CD8-positive, alpha-beta T cell (primary cell): ENCODE measurements at regions of chr16 and their contacts with region 1.

Region 1: DNA sequence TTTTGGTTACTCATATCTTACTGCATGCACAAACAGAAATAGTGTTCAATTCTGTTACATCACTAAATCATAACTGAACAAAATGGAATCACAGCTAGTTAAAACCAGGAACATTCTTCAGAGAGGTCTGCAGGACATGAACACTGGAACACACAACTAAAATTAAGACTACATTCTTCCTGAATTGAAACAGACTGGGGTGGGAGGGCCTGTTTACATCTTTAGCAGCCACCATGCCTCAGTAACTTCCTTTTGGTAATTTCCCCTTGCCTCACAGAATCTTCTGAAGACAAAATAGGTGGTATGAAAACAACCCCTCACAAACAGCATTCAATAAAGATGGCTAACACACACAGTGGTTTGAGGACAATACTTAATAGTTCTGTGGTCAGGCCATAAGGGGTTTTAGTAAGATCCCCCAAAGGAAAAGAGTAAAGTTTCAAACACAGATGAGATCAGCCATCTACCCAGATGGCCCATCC is 6.5 kb downstream of the MARF1 start:
- DNase-seq: peak in 5 of 9 experiments; percentile 22 to 81 (median 35)
- ATAC-seq: peak; percentile 76
- H3K4me3 ChIP-seq: peak overlapping the region in 1 of 2 experiments; percentile 14
- H3K4me3 Mint-ChIP-seq: peak overlapping the region; percentile 74
- H3K27ac ChIP-seq: peak overlapping the region; percentile 55 to 72
- H3K27ac Mint-ChIP-seq: peak overlapping the region; percentile 96
- H3K4me1 ChIP-seq: peaks cover 74% of the 10 kb centered on the region
- H3K4me1 Mint-ChIP-seq: peaks cover 75% of the 10 kb centered on the region
- H3K27me3 ChIP-seq: no peaks in the 10 kb centered on the region
- H3K27me3 Mint-ChIP-seq: no peaks in the 10 kb centered on the region
- CTCF ChIP-seq: no peak

Region 2: DNA sequence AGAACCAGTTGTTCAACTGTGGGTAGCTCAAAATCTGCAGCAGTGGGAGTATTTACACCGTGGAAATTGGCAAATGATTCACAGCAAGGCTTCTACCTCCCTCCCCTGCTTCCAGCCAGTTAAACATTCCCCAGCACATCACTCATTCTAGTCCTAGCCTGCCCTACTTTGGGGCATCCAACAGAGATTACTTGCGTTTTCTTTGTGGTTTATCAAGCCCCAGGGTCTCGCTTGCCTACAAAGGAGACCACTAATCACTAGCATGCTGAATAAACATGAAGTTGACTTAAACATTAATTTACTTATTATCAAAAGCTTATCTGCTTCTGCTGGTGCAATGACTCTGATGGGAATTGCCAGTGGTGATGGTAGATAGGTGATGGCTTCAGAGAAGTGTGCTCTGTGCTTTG is 87.9 kb before region 1 on chr16:
- CTCF ChIA-PET with region 1: no interaction called
- POLR2A ChIA-PET with region 1: no interaction called
- intact Hi-C with region 1: no loop called
- DNase-seq: no peak
- ATAC-seq: no peak
- H3K4me3 ChIP-seq: no peak overlapping the region
- H3K4me3 Mint-ChIP-seq: no peak overlapping the region
- H3K27ac ChIP-seq: no peak overlapping the region
- H3K27ac Mint-ChIP-seq: no peak overlapping the region
- H3K4me1 ChIP-seq: no peaks in the 10 kb centered on the region
- H3K4me1 Mint-ChIP-seq: no peaks in the 10 kb centered on the region
- H3K27me3 ChIP-seq: no peaks in the 10 kb centered on the region
- H3K27me3 Mint-ChIP-seq: no peaks in the 10 kb centered on the region
- CTCF ChIP-seq: no peak

Region 3: GRCh38 chr16:15592324-15592723 is 44.1 kb before region 1 on chr16:
- CTCF ChIA-PET with region 1: interaction called, 4 read pairs
- POLR2A ChIA-PET with region 1: interaction called, 10 read pairs
- intact Hi-C with region 1: loop called in 1 of 2 experiments (anchors 1 kb)
- DNase-seq: peak in 8 of 9 experiments; percentile 19 to 71 (median 48)
- ATAC-seq: peak; percentile 5
- H3K4me3 ChIP-seq: no peak overlapping the region
- H3K4me3 Mint-ChIP-seq: no peak overlapping the region
- H3K27ac ChIP-seq: peak overlapping the region in 1 of 2 experiments; percentile 65
- H3K27ac Mint-ChIP-seq: peak overlapping the region; percentile 85
- H3K4me1 ChIP-seq: peaks cover 29% of the 10 kb centered on the region
- H3K4me1 Mint-ChIP-seq: peaks cover 35% of the 10 kb centered on the region
- H3K27me3 ChIP-seq: no peaks in the 10 kb centered on the region
- H3K27me3 Mint-ChIP-seq: no peaks in the 10 kb centered on the region
- CTCF ChIP-seq: no peak

Region 4: DNA sequence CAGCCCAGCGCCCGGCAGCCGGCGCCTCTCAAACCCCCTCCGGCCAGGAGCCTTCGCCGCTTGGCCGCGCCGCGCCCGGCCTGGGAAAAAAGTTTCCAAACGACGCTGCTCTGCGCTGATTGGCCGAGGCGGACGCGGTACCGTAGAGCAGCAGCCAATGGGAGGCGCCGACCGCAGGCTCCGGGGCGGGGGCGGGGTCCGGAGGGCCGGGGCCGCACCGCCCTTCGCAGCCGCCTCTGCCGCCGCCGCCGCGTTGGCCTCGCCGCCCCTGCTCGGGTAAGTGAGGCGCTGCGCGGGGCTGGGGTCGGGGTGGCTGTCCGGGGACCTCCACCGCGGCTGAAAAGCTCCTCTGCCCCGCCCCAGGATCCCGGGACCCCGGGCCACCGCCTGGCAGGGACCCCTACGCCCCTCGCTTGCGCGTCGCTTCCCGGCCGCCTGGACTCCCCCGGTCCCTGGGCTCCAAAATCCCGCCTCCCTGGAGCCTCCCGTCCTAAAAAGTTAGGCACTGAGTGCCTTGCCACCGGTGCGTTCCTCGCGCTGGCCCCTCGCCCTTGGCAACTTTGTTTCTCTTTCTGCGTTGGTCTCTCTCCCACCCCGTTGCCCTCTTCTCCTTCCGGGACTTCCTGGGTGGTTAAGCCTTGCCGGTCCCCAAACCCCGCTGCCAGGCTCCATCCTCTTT is 13.7 kb after region 1 on chr16 and contains the start of gene NDE1:
- CTCF ChIA-PET with region 1: interaction called, 4 read pairs
- POLR2A ChIA-PET with region 1: interaction called, 10 read pairs
- intact Hi-C with region 1: no loop called
- DNase-seq: peak; percentile 66 to 93 (median 86)
- ATAC-seq: peak; percentile 95
- H3K4me3 ChIP-seq: peak within 1 kb of the TSS; percentile 67 to 90
- H3K4me3 Mint-ChIP-seq: peak within 1 kb of the TSS; percentile 99
- H3K27ac ChIP-seq: peak within 1 kb of the TSS; percentile 91 to 92
- H3K27ac Mint-ChIP-seq: peak within 1 kb of the TSS; percentile 99
- H3K4me1 ChIP-seq: peaks cover 29% of the 10 kb centered on the region
- H3K4me1 Mint-ChIP-seq: peaks cover 46% of the 10 kb centered on the region
- H3K27me3 ChIP-seq: no peaks in the 10 kb centered on the region
- H3K27me3 Mint-ChIP-seq: no peaks in the 10 kb centered on the region
- CTCF ChIP-seq: no peak
- total RNA-seq, gene NDE1: 113 to 119 TPM

Region 5: GRCh38 chr16:15704545-15704987 is 68.1 kb after region 1 on chr16:
- CTCF ChIA-PET with region 1: interaction called, 11 read pairs
- POLR2A ChIA-PET with region 1: no interaction called
- intact Hi-C with region 1: loop called in 1 of 2 experiments (anchors 5 kb)
- DNase-seq: peak; percentile 56 to 87 (median 73)
- ATAC-seq: peak; percentile 82
- H3K4me3 ChIP-seq: no peak overlapping the region
- H3K4me3 Mint-ChIP-seq: no peak overlapping the region
- H3K27ac ChIP-seq: no peak overlapping the region
- H3K27ac Mint-ChIP-seq: peak overlapping the region; percentile 22
- H3K4me1 ChIP-seq: no peaks in the 10 kb centered on the region
- H3K4me1 Mint-ChIP-seq: peaks cover 16% of the 10 kb centered on the region
- H3K27me3 ChIP-seq: no peaks in the 10 kb centered on the region
- H3K27me3 Mint-ChIP-seq: no peaks in the 10 kb centered on the region
- CTCF ChIP-seq: peak; percentile 88

Region 6: DNA sequence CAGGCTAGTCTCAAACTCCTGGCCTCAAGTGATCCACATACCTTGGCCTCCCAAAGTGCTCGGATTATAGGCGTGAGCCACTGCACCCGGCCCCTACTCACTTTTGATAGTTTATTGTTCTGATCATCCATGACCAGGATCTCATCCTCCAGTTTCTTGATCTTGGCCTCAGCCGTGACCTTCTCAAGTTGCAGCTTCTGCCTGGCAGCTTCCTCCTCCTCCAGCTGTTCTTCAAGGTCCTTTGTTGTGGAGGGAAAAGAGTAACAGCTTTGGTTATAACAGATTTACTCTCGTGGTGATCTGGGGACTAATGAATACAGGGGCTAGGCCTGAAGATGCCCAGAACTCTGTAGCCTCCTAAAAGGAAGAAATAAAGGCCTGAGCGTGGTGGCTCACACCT is 103.5 kb after region 1 on chr16:
- CTCF ChIA-PET with region 1: no interaction called
- POLR2A ChIA-PET with region 1: no interaction called
- intact Hi-C with region 1: no loop called
- DNase-seq: no peak
- ATAC-seq: no peak
- H3K4me3 ChIP-seq: no peak overlapping the region
- H3K4me3 Mint-ChIP-seq: no peak overlapping the region
- H3K27ac ChIP-seq: no peak overlapping the region
- H3K27ac Mint-ChIP-seq: no peak overlapping the region
- H3K4me1 ChIP-seq: no peaks in the 10 kb centered on the region
- H3K4me1 Mint-ChIP-seq: no peaks in the 10 kb centered on the region
- H3K27me3 ChIP-seq: no peaks in the 10 kb centered on the region
- H3K27me3 Mint-ChIP-seq: no peaks in the 10 kb centered on the region
- CTCF ChIP-seq: no peak